Breast epithelium (tissue), 4 donors: ENCODE measurements at regions of chr5 and their contacts with region 1.

Region 1: DNA sequence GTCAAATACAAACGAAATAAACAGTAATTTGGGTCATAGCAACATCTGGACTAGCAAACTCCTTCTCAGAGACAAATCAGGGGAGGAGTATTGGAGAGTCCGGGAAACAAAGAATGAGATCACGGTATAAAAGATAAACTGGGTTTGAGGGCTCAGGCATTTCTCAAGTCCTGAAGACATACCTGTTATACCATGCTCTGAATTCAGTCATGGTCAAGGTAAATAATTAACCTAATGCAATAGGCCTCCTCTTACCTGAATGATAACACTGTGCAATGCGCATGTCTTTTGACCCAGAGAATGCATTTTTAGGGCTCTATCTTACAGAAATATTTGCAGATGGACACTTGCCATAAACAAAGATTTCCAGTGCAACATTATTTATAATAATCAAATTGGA is 31.9 kb upstream of the SPDL1 start:
- DNase-seq: no peak
- H3K4me3 ChIP-seq: no peak overlapping the region
- H3K27ac ChIP-seq: no peak overlapping the region
- H3K4me1 ChIP-seq: no peaks in the 10 kb centered on the region
- H3K27me3 ChIP-seq: no peaks in the 10 kb centered on the region
- CTCF ChIP-seq: no peak
- POLR2A ChIP-seq: no peak

Region 2: DNA sequence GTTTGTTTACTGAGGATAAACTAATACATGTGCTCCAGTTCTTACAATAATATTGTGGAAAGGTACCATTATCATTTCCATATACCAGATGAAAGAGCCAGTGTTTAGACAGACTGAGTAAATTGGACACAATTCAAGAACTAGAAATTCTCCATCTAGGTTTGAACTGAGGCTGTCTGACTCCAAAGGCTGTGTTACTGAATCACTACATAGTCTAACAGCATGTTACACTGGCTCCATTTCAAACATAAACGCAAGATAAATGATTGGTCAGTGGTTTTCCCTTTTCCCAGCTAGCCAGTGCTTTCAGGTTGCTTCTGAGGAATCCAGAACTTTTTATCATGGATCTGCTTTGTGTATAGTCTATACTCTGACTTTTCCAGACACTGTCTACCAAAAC is 39.9 kb after region 1 on chr5:
- intact Hi-C with region 1: loop called (anchors 2 kb)
- DNase-seq: no peak
- H3K4me3 ChIP-seq: no peak overlapping the region
- H3K27ac ChIP-seq: no peak overlapping the region
- H3K4me1 ChIP-seq: no peaks in the 10 kb centered on the region
- H3K27me3 ChIP-seq: no peaks in the 10 kb centered on the region
- CTCF ChIP-seq: no peak
- POLR2A ChIP-seq: no peak